ENCODE measurements at regions of chr3 and their contacts with region 1.

Region 1: GRCh38 chr3:177197041-177197727 is at the start of gene TBL1XR1:
- DNase-seq: peak; percentile 92 to 95 (median 95)
- ATAC-seq: peak; percentile 81 to 92 (median 89)
- H3K4me3 ChIP-seq: peak within 1 kb of the TSS; percentile 72 to 96 (median 90)
- H3K27ac ChIP-seq: peak within 1 kb of the TSS; percentile 96 to 99 (median 98)
- H3K4me1 ChIP-seq: peaks cover 0 to 58% (median 23%) of the 10 kb centered on the region in 12 donors
- H3K27me3 ChIP-seq: no peaks in the 10 kb centered on the region
- CTCF ChIP-seq: no peak
- POLR2A ChIP-seq: no peak
- total RNA-seq, gene TBL1XR1: 50.0 to 176 (median 120) TPM

Region 2: GRCh38 chr3:176939022-176939817 is 258.0 kb before region 1 on chr3:
- intact Hi-C with region 1: no loop called
- DNase-seq: peak in 2 of 5 donors; percentile 22 to 33
- ATAC-seq: peak; percentile 32 to 85 (median 79)
- H3K4me3 ChIP-seq: no peak overlapping the region
- H3K27ac ChIP-seq: no peak overlapping the region
- H3K4me1 ChIP-seq: peaks cover 0 to 5% (median 0%) of the 10 kb centered on the region in 12 donors
- H3K27me3 ChIP-seq: no peaks in the 10 kb centered on the region
- CTCF ChIP-seq: peak; percentile 55 to 87 (median 74)
- POLR2A ChIP-seq: no peak

Region 3: DNA sequence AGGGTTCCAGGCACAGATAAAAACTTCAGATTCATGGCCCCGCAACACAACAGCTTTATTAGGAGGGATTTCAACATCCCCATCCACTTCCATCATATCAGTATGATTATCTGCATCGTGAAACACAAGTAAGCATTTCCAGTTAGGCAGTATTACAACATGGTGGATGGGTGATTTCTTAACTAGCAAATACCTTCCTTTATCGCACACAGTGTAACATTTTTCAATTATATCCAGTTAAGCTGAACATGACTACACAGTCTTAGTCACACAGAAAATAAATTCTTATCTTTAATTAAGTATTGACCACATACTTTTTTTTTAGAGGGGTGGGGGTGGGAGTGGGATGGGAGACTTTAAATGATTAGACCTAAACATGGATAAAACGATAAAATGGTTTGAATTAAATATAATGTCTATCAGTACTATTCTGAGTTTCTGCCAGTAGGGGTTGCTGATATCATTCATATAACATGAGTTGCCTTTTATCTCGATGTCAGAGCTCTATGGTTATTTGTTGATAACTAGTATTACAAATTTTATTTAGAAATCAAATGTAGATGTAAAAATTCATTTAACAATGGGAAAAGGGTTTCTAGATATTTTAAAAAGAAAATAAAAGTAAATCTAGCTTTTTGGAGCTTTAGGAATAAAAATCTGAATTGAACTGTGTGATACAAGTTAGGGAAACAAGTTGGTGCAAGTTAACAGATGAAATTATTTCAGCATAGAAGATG is 146.5 kb before region 1 on chr3:
- intact Hi-C with region 1: loop called (anchors 5 to 10 kb)
- DNase-seq: no peak
- ATAC-seq: peak; percentile 53 to 74 (median 60)
- H3K4me3 ChIP-seq: no peak overlapping the region
- H3K27ac ChIP-seq: no peak overlapping the region
- H3K4me1 ChIP-seq: peaks cover 0 to 22% (median 14%) of the 10 kb centered on the region in 12 donors
- H3K27me3 ChIP-seq: no peaks in the 10 kb centered on the region
- CTCF ChIP-seq: peak; percentile 35 to 73 (median 63)
- POLR2A ChIP-seq: no peak

Region 4: DNA sequence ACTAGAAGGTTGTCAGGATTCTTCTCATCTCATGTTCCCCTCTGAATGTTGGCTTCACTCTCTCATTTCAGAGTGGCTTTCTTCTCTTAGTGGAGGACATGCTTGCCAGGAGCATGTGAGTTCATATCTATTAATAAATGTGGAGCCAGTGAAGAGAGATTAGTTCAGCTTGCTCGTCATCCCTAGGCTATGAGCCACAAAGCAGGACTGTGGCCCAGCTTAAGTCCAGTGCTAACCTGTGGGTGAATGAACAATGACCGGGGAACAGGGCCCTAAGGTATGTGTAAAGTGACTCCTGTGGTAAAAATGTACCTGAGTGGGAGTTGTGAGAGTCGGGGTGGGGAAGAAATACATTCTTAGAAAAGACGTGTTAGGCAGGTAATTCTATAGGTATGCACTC is 97.0 kb after region 1 on chr3:
- intact Hi-C with region 1: loop called in 2 of 10 experiments (anchors 5 to 10 kb)
- DNase-seq: peak in 4 of 5 donors; percentile 75 to 85 (median 78)
- ATAC-seq: peak; percentile 96 to 97 (median 97)
- H3K4me3 ChIP-seq: no peak overlapping the region
- H3K27ac ChIP-seq: peak overlapping the region; percentile 49 to 90 (median 80)
- H3K4me1 ChIP-seq: peaks cover 0 to 28% (median 9%) of the 10 kb centered on the region in 12 donors
- H3K27me3 ChIP-seq: no peaks in the 10 kb centered on the region
- CTCF ChIP-seq: no peak
- POLR2A ChIP-seq: no peak

Region 5: DNA sequence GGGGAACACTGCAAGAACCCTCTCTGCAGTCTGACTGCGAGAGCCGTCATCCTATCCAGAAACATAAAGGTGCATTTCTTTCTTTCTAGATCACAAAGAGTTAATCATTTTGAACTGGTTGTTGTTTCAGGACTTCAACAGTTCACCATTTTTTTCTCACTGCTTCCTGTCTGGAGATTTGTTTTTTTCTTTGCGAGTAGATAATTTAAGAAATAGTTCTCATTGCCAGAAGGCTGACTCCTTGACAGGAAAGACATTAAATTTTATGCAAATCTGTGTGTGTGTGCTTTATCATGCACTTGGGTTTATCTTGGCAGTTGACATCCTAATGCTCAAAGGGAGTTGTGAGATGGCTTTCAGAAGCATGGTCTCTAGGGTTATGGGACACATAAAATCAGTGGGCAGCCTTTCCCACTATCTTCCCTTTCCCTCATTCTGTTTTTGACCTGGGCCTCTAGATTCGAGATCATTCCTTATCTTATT is 123.6 kb after region 1 on chr3:
- intact Hi-C with region 1: no loop called
- DNase-seq: no peak
- ATAC-seq: peak in 1 of 4 donors; percentile 16
- H3K4me3 ChIP-seq: no peak overlapping the region
- H3K27ac ChIP-seq: peak overlapping the region in 9 of 12 donors; percentile 0 to 56 (median 32)
- H3K4me1 ChIP-seq: peaks cover 2 to 29% (median 15%) of the 10 kb centered on the region in 12 donors
- H3K27me3 ChIP-seq: no peaks in the 10 kb centered on the region
- CTCF ChIP-seq: no peak
- POLR2A ChIP-seq: no peak

Region 6: GRCh38 chr3:177444696-177445095 is 247.5 kb after region 1 on chr3:
- intact Hi-C with region 1: no loop called
- DNase-seq: no peak
- ATAC-seq: no peak
- H3K4me3 ChIP-seq: no peak overlapping the region
- H3K27ac ChIP-seq: peak overlapping the region in 1 of 12 donors; percentile 75
- H3K4me1 ChIP-seq: peaks cover 0 to 32% (median 0%) of the 10 kb centered on the region in 12 donors
- H3K27me3 ChIP-seq: no peaks in the 10 kb centered on the region
- CTCF ChIP-seq: no peak
- POLR2A ChIP-seq: no peak

Region 7: GRCh38 chr3:177491296-177492032 is 294.3 kb after region 1 on chr3:
- intact Hi-C with region 1: loop called in 1 of 10 experiments (anchors 10 kb)
- DNase-seq: peak in 3 of 5 donors; percentile 25 to 58 (median 30)
- ATAC-seq: peak in 3 of 4 donors; percentile 63 to 83 (median 74)
- H3K4me3 ChIP-seq: no peak overlapping the region
- H3K27ac ChIP-seq: peak overlapping the region in 7 of 12 donors; percentile 8 to 60 (median 52)
- H3K4me1 ChIP-seq: peaks cover 0 to 25% (median 15%) of the 10 kb centered on the region in 12 donors
- H3K27me3 ChIP-seq: no peaks in the 10 kb centered on the region
- CTCF ChIP-seq: no peak
- POLR2A ChIP-seq: no peak

Region 8: GRCh38 chr3:177724020-177724638 is 526.9 kb after region 1 on chr3:
- intact Hi-C with region 1: loop called in 2 of 10 experiments (anchors 5 to 10 kb)
- DNase-seq: peak; percentile 66 to 91 (median 72)
- ATAC-seq: peak; percentile 91 to 98 (median 96)
- H3K4me3 ChIP-seq: no peak overlapping the region
- H3K27ac ChIP-seq: peak overlapping the region; percentile 28 to 80 (median 72)
- H3K4me1 ChIP-seq: peaks cover 0 to 54% (median 30%) of the 10 kb centered on the region in 12 donors
- H3K27me3 ChIP-seq: no peaks in the 10 kb centered on the region
- CTCF ChIP-seq: no peak
- POLR2A ChIP-seq: no peak

Region 9: DNA sequence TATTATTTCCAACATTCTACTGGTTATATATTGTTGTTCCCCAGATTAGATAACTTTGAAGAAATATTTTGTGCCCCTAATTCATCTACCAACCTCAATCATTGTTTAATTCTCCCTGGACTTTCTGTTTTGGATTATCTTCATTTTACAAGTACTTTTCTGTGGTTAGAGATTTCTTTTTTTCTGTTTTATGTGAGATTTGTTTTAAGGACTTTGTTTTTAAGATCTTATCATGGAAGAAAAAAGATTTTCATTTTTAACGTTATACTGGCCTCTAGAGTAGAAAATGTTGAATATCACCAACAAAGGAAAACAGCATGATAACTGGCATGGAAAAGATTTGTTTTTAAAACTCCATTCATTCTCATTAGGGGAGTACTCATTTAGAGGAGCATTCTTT is 1128.1 kb after region 1 on chr3:
- intact Hi-C with region 1: loop called in 4 of 10 experiments (anchors 2 to 10 kb)
- DNase-seq: no peak
- ATAC-seq: no peak
- H3K4me3 ChIP-seq: no peak overlapping the region
- H3K27ac ChIP-seq: peak overlapping the region in 5 of 12 donors; percentile 14 to 41 (median 32)
- H3K4me1 ChIP-seq: peaks cover 0 to 32% (median 19%) of the 10 kb centered on the region in 12 donors
- H3K27me3 ChIP-seq: no peaks in the 10 kb centered on the region
- CTCF ChIP-seq: peak; percentile 18 to 66 (median 48)
- POLR2A ChIP-seq: no peak